Activated CD4-positive, alpha-beta T cell treated with anti-CD3 and anti-CD28 coated beads for 36 hours (primary cell): ENCODE measurements at regions of chr2 and their contacts with region 1.

Region 1: GRCh38 chr2:19863303-19864041 is 38.3 kb downstream of the TTC32 start:
- DNase-seq: peak; percentile 81
- ATAC-seq: peak; percentile 84
- H3K4me3 Mint-ChIP-seq: no peak overlapping the region
- H3K27ac Mint-ChIP-seq: no peak overlapping the region
- H3K4me1 Mint-ChIP-seq: peaks cover 8% of the 10 kb centered on the region
- H3K27me3 Mint-ChIP-seq: peaks cover 2% of the 10 kb centered on the region

Region 2: GRCh38 chr2:18435421-18436037 is 1427.9 kb before region 1 on chr2:
- CTCF ChIA-PET with region 1: no interaction called
- POLR2A ChIA-PET with region 1: no interaction called
- intact Hi-C with region 1: loop called in 1 of 2 experiments (anchors 1 kb)
- DNase-seq: peak; percentile 23
- ATAC-seq: no peak
- H3K4me3 Mint-ChIP-seq: no peak overlapping the region
- H3K27ac Mint-ChIP-seq: no peak overlapping the region
- H3K4me1 Mint-ChIP-seq: no peaks in the 10 kb centered on the region
- H3K27me3 Mint-ChIP-seq: peaks cover 3% of the 10 kb centered on the region

Region 3: DNA sequence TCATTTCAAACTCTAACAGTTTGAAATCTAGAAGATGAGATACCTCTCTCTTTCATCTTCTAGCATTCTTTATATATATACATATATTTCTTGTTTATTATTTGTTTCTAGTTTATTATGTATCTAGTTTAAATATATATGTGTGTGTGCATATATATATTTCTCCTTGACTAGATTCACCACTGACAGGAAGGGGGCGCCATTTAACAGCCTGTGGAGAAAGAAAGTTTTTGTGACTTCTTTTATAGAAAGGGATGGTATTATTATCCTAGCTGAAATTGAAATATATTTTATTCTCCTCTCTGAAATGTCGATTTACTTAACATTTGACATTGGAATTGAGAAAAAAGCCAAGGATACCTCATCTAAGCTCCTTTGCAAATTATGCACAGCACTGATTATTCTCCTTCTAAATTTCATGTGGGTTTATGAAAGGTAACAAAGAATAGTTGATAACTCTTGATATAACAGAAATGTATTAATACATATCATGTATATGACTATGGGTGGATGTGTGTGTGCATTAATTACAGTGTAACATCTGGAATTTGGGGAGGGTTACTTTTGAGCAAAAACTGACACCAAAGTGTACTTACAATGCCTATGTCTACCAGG is 1113.5 kb before region 1 on chr2:
- CTCF ChIA-PET with region 1: no interaction called
- POLR2A ChIA-PET with region 1: no interaction called
- intact Hi-C with region 1: loop called (anchors 1 to 2 kb)
- DNase-seq: peak; percentile 67
- ATAC-seq: no peak
- H3K4me3 Mint-ChIP-seq: no peak overlapping the region
- H3K27ac Mint-ChIP-seq: no peak overlapping the region
- H3K4me1 Mint-ChIP-seq: no peaks in the 10 kb centered on the region
- H3K27me3 Mint-ChIP-seq: no peaks in the 10 kb centered on the region

Region 4: GRCh38 chr2:19685731-19686130 is 177.7 kb before region 1 on chr2:
- CTCF ChIA-PET with region 1: no interaction called
- POLR2A ChIA-PET with region 1: no interaction called
- intact Hi-C with region 1: loop called in 1 of 2 experiments (anchors 2 kb)
- DNase-seq: no peak
- ATAC-seq: no peak
- H3K4me3 Mint-ChIP-seq: no peak overlapping the region
- H3K27ac Mint-ChIP-seq: no peak overlapping the region
- H3K4me1 Mint-ChIP-seq: no peaks in the 10 kb centered on the region
- H3K27me3 Mint-ChIP-seq: peaks cover 4% of the 10 kb centered on the region

Region 5: DNA sequence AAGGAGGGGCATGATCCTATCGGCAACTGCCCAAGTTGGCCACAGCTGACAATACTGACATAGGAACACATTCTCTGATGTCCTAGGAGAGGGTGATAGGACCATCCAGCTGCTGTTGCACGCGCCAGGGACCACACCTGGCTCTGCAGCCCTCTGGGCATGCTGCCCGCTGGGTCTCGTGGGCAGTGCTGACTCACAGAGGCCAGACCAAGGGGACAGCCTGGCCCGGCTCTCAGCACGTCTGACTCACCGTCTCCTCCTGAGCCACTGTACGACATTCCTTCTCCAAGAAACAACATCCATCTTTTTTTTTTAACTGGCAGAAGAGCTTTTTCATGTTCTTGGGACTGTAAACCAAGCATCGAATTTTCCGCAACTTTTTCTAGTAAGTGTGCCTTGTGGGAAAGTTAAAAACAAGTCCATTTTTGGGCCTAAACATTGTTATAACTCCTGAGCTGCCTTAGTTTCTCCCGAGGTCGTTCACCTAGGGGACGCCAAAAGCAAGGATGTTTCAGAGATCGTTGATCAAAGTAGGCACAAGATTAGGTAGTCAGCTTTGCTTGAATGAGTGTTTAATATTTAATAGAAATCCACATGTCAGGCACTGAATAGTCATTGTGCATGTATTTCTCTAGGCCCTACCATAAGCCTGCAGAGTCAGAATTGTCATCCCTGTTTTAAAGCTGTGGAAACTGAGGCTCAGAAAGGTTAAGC is 61.9 kb before region 1 on chr2:
- CTCF ChIA-PET with region 1: no interaction called
- POLR2A ChIA-PET with region 1: no interaction called
- intact Hi-C with region 1: no loop called
- DNase-seq: no peak
- ATAC-seq: no peak
- H3K4me3 Mint-ChIP-seq: no peak overlapping the region
- H3K27ac Mint-ChIP-seq: no peak overlapping the region
- H3K4me1 Mint-ChIP-seq: no peaks in the 10 kb centered on the region
- H3K27me3 Mint-ChIP-seq: no peaks in the 10 kb centered on the region

Region 6: GRCh38 chr2:20027705-20028434 is 164.4 kb after region 1 on chr2:
- CTCF ChIA-PET with region 1: no interaction called
- POLR2A ChIA-PET with region 1: no interaction called
- intact Hi-C with region 1: no loop called
- DNase-seq: no peak
- ATAC-seq: no peak
- H3K4me3 Mint-ChIP-seq: no peak overlapping the region
- H3K27ac Mint-ChIP-seq: no peak overlapping the region
- H3K4me1 Mint-ChIP-seq: no peaks in the 10 kb centered on the region
- H3K27me3 Mint-ChIP-seq: no peaks in the 10 kb centered on the region